ENCODE measurements at regions of chr3 and their contacts with region 1.

Region 1: DNA sequence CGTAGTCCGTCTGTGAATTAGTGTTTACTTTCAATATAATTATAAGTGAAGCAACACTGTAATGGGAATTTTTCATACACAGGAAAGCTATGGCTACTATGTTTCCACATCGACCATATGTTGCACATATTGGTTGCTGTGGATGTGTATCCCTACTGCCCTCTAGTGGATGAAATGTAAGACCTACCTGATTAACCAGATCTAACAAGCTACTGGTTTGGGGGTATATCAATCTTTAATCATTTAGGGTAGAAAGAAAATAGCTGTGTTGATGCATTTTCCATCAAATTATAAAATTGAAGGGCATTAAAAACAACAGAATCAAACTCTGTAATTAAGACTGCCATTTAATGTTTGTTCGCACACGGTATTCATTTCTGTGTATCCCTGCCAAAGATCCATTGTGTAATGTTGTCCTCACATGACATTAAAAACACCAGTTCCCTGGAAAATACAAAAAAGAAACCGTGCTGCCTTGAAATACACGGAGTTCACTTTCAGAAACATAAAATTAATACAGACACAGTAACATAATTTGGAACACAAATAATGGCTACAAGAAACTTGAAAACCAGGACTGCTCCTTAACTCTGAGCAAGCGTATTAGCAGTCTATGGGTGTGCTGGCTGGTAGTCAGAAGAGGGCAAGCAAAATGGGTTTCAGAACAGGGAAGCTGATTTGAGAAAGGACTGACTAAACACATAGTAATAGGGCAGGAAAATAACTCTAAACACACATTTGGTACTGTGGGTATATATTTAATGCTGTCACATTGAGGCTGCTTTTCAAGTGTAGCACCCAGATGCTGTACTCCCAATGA is 125.1 kb downstream of the TIGIT start:
- DNase-seq: no peak
- H3K4me3 Mint-ChIP-seq: peak overlapping the region; percentile 54
- H3K27ac Mint-ChIP-seq: peak overlapping the region; percentile 61
- H3K4me1 Mint-ChIP-seq: peaks cover 28% of the 10 kb centered on the region
- H3K27me3 Mint-ChIP-seq: no peaks in the 10 kb centered on the region

Region 2: GRCh38 chr3:113769551-113769950 is 649.4 kb before region 1 on chr3:
- CTCF ChIA-PET with region 1: no interaction called
- POLR2A ChIA-PET with region 1: no interaction called
- intact Hi-C with region 1: no loop called
- DNase-seq: no peak
- H3K4me3 Mint-ChIP-seq: no peak overlapping the region
- H3K27ac Mint-ChIP-seq: no peak overlapping the region
- H3K4me1 Mint-ChIP-seq: peaks cover 6% of the 10 kb centered on the region
- H3K27me3 Mint-ChIP-seq: no peaks in the 10 kb centered on the region

Region 3: GRCh38 chr3:114152519-114153151 is 266.3 kb before region 1 on chr3:
- CTCF ChIA-PET with region 1: interaction called, 61 read pairs
- POLR2A ChIA-PET with region 1: no interaction called
- intact Hi-C with region 1: loop called (anchors 1 kb)
- DNase-seq: peak; percentile 90
- H3K4me3 Mint-ChIP-seq: peak overlapping the region; percentile 25
- H3K27ac Mint-ChIP-seq: peak overlapping the region; percentile 18
- H3K4me1 Mint-ChIP-seq: peaks cover 8% of the 10 kb centered on the region
- H3K27me3 Mint-ChIP-seq: no peaks in the 10 kb centered on the region

Region 4: DNA sequence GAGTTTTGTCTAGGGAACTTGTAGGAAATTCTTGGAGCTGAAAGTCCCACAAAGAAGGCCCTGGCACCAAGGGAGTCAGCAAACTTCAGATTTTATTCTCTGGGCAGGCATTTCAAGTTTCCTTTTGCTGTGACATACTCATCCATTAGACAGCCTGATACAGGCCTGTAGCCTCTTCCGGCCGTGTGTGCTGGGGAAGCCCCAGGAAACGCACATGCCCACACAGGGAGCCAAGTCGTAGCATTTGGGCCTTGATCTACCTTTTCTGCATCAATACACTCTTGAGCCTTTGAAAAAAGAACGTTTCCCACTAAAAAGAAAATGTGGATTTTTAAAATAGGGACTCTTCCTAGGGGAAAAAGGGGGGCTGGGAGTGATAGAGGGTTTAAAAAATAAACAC is 110.1 kb before region 1 on chr3:
- CTCF ChIA-PET with region 1: interaction called, 10 read pairs
- POLR2A ChIA-PET with region 1: no interaction called
- intact Hi-C with region 1: loop called (anchors 1 kb)
- DNase-seq: peak; percentile 83
- H3K4me3 Mint-ChIP-seq: peak overlapping the region; percentile 70
- H3K27ac Mint-ChIP-seq: peak overlapping the region; percentile 99
- H3K4me1 Mint-ChIP-seq: peaks cover 77% of the 10 kb centered on the region
- H3K27me3 Mint-ChIP-seq: no peaks in the 10 kb centered on the region

Region 5: DNA sequence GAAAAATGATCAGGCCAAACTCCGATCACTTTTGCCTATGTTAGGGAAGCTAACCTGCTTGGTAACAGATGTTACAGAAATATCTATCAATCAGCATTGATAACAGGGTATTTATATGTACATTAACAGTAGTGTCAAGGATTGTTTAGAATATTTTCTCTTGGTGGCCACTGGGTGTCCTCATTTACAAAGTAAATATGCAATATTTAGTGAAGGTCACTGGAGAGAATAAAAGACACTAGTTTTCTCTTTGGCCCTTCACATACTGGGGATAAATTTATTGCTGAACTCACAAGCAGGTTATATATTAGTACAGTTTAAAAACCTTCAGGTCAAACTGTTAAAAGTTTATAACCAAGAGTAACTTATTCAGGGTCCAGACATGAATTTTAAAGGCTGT is 56.1 kb before region 1 on chr3:
- CTCF ChIA-PET with region 1: interaction called, 17 read pairs
- POLR2A ChIA-PET with region 1: no interaction called
- intact Hi-C with region 1: loop called (anchors 1 kb)
- DNase-seq: no peak
- H3K4me3 Mint-ChIP-seq: no peak overlapping the region
- H3K27ac Mint-ChIP-seq: no peak overlapping the region
- H3K4me1 Mint-ChIP-seq: peaks cover 17% of the 10 kb centered on the region
- H3K27me3 Mint-ChIP-seq: no peaks in the 10 kb centered on the region

Region 6: DNA sequence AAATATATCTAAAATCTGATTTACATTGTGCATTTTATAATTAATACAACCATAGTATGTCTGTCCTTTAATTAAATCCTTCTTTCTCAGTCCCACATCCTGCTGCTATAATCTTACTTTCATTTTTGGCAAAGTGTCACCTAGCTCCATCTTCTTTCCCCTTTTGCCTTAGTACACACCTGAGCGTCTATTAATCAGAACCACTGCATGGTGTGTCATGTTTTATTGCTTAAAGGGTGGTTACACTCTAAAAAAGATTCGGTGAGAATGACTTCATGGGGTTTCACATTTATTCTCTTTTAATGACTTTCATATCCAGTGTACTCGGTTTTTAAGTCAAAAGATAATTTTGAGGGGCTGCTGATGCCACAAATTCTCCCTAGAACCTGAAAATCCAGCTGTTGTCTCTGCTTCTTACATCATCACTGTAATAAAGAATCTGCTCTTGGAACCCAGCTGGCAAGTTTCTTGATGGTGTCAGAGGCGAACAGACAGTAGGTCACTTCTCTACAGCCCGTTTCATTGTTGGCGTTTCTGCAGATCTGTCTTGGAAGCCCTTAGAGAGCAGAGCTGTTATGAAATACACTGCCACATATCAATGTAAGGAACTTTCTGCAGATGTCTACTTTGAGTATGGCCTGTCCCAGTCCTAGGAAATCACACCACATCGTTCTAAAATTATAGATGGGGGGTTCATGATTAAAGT is 25.4 kb before region 1 on chr3:
- CTCF ChIA-PET with region 1: interaction called, 15 read pairs
- POLR2A ChIA-PET with region 1: interaction called, 5 read pairs
- intact Hi-C with region 1: loop called (anchors 2 kb)
- DNase-seq: no peak
- H3K4me3 Mint-ChIP-seq: no peak overlapping the region
- H3K27ac Mint-ChIP-seq: no peak overlapping the region
- H3K4me1 Mint-ChIP-seq: peaks cover 31% of the 10 kb centered on the region
- H3K27me3 Mint-ChIP-seq: no peaks in the 10 kb centered on the region

Region 7: DNA sequence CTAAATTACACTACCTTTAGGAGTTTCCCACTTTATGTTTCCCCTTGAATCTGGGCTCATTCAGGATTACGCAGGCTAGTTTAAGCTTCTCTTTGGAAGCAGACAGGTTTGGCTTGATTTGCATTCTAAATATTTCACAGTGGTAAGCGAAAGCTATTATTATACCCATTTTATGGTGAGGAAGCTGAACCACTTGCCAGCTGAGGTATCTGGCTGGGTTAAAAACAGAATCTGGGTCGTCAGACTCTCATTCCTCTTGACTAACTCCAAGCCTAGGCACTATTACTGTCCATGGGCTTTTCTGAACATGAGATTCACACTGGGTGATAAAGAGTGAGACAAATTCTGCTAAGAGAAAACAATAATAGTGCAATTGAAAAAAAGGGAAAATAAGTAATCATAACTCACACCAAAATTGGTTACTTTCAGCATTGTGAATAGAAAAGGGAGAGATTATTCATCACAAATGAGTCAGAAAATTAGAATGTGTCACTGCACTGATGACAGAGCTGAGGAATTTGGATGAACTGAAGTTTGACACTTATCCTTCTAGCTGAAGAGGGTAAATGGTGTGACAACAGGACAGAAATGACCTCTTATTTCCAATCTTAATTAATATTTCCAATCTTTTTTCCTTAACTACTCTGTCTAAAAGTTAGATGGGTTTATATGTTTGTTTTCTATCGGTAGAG is 86.2 kb after region 1 on chr3:
- CTCF ChIA-PET with region 1: interaction called, 7 read pairs
- POLR2A ChIA-PET with region 1: no interaction called
- intact Hi-C with region 1: loop called (anchors 1 kb)
- DNase-seq: no peak
- H3K4me3 Mint-ChIP-seq: no peak overlapping the region
- H3K27ac Mint-ChIP-seq: no peak overlapping the region
- H3K4me1 Mint-ChIP-seq: peaks cover 31% of the 10 kb centered on the region
- H3K27me3 Mint-ChIP-seq: peaks cover 14% of the 10 kb centered on the region

Measured in activated CD4-positive, alpha-beta memory T cell treated with anti-CD3 and anti-CD28 coated beads for 36 hours (primary cell).